Body of pancreas (tissue), 4 donors: ENCODE measurements at regions of chr1 and their contacts with region 1.

Region 1: DNA sequence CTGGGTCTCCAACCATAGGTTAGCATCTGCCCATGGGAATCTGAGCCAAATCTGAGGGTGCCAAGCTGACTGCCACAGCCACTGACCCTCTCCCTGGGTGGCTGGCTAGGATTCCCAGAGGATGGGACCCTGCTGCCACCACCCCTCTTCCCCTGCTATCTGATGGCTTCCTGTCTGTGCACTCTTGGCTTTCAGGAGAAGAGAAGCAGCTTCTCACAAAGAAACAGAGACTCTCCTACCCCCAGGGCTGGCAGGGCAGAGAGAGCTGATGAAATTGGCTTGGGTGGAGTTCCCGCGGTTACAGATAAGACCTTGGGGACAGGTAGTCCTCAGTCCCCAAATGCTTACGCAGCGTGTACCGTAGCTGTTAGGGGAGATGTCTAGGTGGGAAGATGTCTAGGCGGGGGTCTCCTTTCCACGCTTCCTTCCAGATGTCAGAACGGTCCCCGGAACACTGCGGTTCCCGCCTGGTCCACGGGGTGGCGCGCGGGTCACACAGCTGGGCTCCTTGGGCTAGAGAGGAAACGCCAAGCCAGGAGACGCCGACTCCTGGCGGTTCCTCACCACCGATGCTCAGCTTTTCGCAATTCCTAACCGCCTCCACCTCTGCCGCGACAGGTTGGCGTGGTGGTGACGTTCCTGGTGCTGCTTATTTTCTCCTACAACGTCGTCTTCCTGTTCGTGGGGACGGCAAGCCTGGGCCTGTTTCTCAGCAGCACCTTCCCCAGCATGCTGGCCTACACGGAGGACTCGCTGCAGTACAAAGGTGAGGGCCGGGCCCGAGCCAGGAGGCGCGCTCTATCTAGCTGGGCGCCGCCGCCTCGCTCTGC is 40.1 kb downstream of the ELK4 start:
- DNase-seq: peak; percentile 89 to 93 (median 90)
- ATAC-seq: peak; percentile 96
- H3K4me3 ChIP-seq: no peak overlapping the region
- H3K27ac ChIP-seq: peak overlapping the region in 3 of 4 donors; percentile 54 to 80 (median 74)
- H3K4me1 ChIP-seq: peaks cover 28% of the 10 kb centered on the region
- H3K27me3 ChIP-seq: no peaks in the 10 kb centered on the region
- CTCF ChIP-seq: peak; percentile 89 to 99 (median 99)
- POLR2A ChIP-seq: peak in 2 of 3 donors; percentile 59 to 62

Region 2: DNA sequence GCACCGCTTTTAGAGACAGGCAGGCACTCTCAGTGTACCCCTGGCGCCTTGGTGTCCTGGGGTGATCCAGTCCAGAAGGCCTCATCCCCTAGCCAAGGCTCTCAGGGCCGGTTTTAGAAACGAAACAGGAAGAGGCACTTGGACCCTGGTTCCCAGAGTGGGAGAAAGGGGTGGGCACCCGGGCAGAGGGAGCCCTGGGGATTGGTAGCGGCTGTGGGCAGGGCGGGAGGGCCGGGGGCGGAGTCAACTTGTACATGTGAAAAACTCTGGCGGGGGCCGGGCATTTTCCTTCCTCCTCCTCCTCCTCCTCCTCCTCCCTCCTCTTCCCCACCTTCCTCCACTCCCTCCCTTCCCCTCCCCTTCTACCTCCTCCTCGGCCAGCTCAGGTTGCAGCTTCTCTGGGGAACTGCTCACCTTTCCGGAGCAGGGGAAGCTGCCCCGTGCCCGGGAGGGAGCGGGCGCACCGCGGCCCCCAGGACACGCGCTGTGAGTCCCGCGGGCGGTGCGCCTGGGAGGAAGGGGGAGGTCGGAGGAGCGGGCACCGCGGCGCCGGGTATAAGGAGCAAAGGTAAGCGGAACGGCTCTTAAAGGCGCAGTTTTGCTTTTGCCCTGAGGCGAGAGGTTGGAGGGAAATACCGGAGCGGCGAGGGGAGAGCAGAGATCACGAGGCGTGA is 87.3 kb before region 1 on chr1 and contains the start of gene CDK18:
- intact Hi-C with region 1: no loop called
- DNase-seq: peak; percentile 89 to 95 (median 92)
- ATAC-seq: peak; percentile 88
- H3K4me3 ChIP-seq: peak within 1 kb of the TSS; percentile 33 to 52
- H3K27ac ChIP-seq: peak within 1 kb of the TSS; percentile 54 to 77 (median 69)
- H3K4me1 ChIP-seq: peaks cover 25% of the 10 kb centered on the region
- H3K27me3 ChIP-seq: no peaks in the 10 kb centered on the region
- CTCF ChIP-seq: no peak
- POLR2A ChIP-seq: peak; percentile 22 to 68 (median 64)
- total RNA-seq, gene CDK18: 28.0 to 28.7 TPM

Region 3: DNA sequence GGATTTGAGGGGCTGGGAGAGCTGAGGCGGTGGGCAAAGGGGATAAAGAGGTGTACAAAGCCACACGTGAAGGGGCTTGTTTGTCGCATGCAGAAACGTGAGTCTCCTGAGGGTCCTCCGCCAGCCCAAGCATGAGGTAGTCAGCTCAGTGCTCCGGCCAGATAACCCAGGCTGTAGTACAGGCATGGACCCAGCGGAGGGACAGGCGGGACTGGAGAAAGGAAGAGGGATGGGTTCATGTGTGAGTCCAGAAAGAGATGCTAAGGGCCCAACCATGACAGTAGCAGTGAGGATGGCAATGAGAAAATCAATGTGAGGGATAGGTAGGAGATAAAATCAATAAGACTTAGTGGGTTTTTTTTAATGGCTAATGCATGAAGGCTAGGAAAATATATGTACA is 53.8 kb after region 1 on chr1:
- intact Hi-C with region 1: no loop called
- DNase-seq: no peak
- ATAC-seq: no peak
- H3K4me3 ChIP-seq: no peak overlapping the region
- H3K27ac ChIP-seq: no peak overlapping the region
- H3K4me1 ChIP-seq: no peaks in the 10 kb centered on the region
- H3K27me3 ChIP-seq: no peaks in the 10 kb centered on the region
- CTCF ChIP-seq: no peak
- POLR2A ChIP-seq: no peak

Region 4: DNA sequence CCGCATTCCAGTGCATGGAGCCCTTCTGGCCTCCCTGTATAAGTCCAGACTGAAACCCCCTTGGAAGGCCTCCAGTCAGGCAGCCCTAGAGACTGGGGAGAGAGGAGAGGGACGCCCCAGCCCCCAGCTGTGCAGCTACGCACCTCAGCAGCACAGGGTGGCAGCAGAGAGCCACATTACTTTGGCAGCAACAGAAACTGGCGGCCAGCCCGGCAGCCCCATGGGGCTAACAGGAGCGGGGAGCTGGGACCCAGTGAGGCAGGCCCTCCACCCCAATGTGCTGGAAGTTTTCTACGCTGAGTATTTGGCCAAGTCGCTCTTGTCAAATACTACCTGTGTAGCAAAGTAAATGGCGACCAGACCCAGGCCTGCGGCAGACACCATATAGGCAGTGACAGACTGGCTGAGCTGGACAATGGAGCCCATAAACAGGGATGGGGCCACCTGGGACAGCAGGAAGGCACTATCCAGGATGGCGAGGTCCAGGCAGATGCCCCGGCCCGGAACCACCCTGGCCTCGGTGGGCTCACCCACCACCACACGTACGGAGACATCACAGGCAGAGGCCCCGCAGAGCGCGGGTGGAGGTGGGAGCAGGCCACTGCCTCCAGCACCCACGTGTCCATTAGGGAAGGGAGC is 67.3 kb after region 1 on chr1:
- intact Hi-C with region 1: loop called (anchors 2 kb)
- DNase-seq: peak; percentile 82 to 91 (median 84)
- ATAC-seq: peak; percentile 83
- H3K4me3 ChIP-seq: no peak overlapping the region
- H3K27ac ChIP-seq: no peak overlapping the region
- H3K4me1 ChIP-seq: peaks cover 8% of the 10 kb centered on the region
- H3K27me3 ChIP-seq: no peaks in the 10 kb centered on the region
- CTCF ChIP-seq: peak; percentile 75 to 91 (median 86)
- POLR2A ChIP-seq: no peak

Region 5: DNA sequence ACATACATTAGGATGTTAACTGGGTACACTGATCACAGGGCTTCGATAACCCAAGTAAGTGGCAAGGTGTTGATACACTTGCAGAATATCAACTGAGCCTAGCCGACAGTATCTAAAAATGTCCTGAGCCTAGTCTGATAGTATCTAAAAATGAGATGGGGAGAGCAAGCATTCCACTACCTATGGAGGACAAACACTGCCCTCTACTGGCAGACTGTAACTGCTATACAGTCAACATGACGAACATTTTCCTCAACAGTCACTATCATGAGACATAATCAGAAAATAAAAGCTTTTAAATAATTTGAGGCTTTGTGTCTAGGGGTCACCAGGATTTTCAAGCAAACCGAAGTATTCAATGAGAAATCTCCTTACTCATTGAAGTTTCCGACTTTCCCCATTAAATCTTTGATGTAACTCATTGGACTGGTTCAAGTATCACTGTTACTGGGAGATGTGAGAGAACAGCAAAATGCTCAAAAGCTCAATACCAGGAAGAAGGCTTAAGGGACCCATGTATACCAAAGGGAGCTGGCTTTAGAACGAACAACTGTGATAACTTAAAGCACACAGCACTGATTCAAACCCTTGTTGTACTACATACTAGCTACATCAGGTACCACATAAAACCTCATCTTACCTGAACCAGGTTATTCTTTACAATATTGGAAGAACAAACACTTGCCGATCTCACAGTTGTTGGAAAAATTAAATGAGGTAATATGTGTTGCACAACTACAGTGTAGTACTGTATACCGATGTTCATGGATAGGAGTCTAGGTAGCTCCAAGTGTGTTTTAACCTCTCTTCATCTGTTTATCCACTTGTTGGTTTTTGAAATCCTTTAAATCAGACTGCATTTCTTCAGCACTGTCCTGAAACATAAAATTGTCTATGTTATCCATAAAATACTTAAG is 119.6 kb after region 1 on chr1:
- intact Hi-C with region 1: loop called (anchors 10 kb)
- DNase-seq: peak; percentile 67 to 84 (median 72)
- ATAC-seq: peak; percentile 84
- H3K4me3 ChIP-seq: no peak overlapping the region
- H3K27ac ChIP-seq: no peak overlapping the region
- H3K4me1 ChIP-seq: peaks cover 2% of the 10 kb centered on the region
- H3K27me3 ChIP-seq: no peaks in the 10 kb centered on the region
- CTCF ChIP-seq: peak in 6 of 7 experiments; percentile 69 to 90 (median 85)
- POLR2A ChIP-seq: no peak